B cell (primary cell): ENCODE measurements at regions of chr6 and their contacts with region 1.

Region 1: GRCh38 chr6:1604158-1605030 is 5.3 kb upstream of the FOXC1 start:
- DNase-seq: peak; percentile 84
- ATAC-seq: peak; percentile 81
- H3K4me3 ChIP-seq: peak overlapping the region in 4 of 5 experiments; percentile 10 to 59 (median 42)
- H3K4me3 Mint-ChIP-seq: peak overlapping the region; percentile 34
- H3K27ac ChIP-seq: no peak overlapping the region
- H3K27ac Mint-ChIP-seq: no peak overlapping the region
- H3K4me1 ChIP-seq: peaks cover 50 to 52% of the 10 kb centered on the region in 2 donors
- H3K4me1 Mint-ChIP-seq: peaks cover 34% of the 10 kb centered on the region
- H3K27me3 ChIP-seq: peaks cover 0 to 83% (median 66%) of the 10 kb centered on the region in 4 experiments
- H3K27me3 Mint-ChIP-seq: peaks cover 73% of the 10 kb centered on the region
- CTCF ChIP-seq: peak; percentile 99

Region 2: GRCh38 chr6:2103644-2104523 is 499.5 kb after region 1 on chr6:
- CTCF ChIA-PET with region 1: interaction called, 19 read pairs
- POLR2A ChIA-PET with region 1: no interaction called
- intact Hi-C with region 1: loop called (anchors 1 kb)
- DNase-seq: peak; percentile 50
- ATAC-seq: peak; percentile 36
- H3K4me3 ChIP-seq: no peak overlapping the region
- H3K4me3 Mint-ChIP-seq: no peak overlapping the region
- H3K27ac ChIP-seq: no peak overlapping the region
- H3K27ac Mint-ChIP-seq: no peak overlapping the region
- H3K4me1 ChIP-seq: no peaks in the 10 kb centered on the region
- H3K4me1 Mint-ChIP-seq: no peaks in the 10 kb centered on the region
- H3K27me3 ChIP-seq: no peaks in the 10 kb centered on the region
- H3K27me3 Mint-ChIP-seq: no peaks in the 10 kb centered on the region
- CTCF ChIP-seq: peak; percentile 77